PC-3 (cell line): ENCODE measurements at regions of chr4 and their contacts with region 1.

Region 1: DNA sequence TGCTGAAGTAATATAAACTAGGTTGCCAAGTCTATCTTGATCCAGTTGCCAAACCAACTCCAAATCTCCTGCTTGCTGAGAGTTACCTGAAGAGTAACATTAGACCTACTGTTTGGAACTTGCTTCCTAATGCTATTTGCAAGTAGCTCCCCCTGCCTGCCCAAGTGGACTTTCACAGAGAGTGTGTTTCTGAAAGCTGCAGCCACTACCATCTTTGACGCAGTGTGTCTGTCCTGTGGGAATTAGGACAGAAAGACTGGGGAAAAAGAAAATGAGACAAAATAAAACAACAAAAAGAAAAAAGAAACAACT is 195.0 kb upstream of the HS3ST1 start:
- DNase-seq: peak; percentile 63
- ATAC-seq: peak; percentile 84
- H3K4me3 ChIP-seq: no peak overlapping the region
- H3K27ac ChIP-seq: peak overlapping the region; percentile 82
- H3K4me1 ChIP-seq: peaks cover 58% of the 10 kb centered on the region
- H3K27me3 ChIP-seq: no peaks in the 10 kb centered on the region
- CTCF ChIP-seq: peak; percentile 69

Region 2: GRCh38 chr4:11428899-11429698 is 194.6 kb before region 1 on chr4:
- CTCF ChIA-PET with region 1: no interaction called
- POLR2A ChIA-PET with region 1: no interaction called
- intact Hi-C with region 1: loop called (anchors 1 kb)
- DNase-seq: peak; percentile 86
- ATAC-seq: peak; percentile 90
- H3K4me3 ChIP-seq: peak overlapping the region; percentile 90
- H3K27ac ChIP-seq: peak overlapping the region; percentile 91
- H3K4me1 ChIP-seq: peaks cover 10% of the 10 kb centered on the region; the same call in 1 of the 2 replicates
- H3K27me3 ChIP-seq: no peaks in the 10 kb centered on the region
- CTCF ChIP-seq: peak; percentile 64

Region 3: DNA sequence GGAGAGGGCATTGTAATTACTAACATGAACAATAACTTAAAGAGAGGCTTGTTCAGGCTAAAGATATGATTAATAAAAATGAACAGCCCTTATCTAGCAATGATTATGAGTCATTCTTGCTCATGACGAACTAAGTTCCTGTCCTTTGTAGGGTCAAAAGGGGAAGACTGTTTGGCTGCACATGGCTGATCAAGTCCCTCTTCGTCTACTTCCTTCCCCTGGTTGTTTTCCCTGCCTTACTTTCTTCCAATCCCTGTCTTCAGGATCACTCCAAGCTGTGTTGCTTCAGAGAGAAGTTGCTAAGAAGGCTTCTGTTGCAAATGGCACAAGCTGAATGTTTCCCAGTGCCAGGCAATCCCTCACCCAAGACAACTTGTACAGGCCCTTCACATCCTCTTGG is 80.0 kb before region 1 on chr4:
- CTCF ChIA-PET with region 1: no interaction called
- POLR2A ChIA-PET with region 1: no interaction called
- intact Hi-C with region 1: loop called (anchors 1 kb)
- DNase-seq: peak; percentile 73
- ATAC-seq: peak; percentile 52
- H3K4me3 ChIP-seq: peak overlapping the region; percentile 25; the same call in 1 of the 2 replicates
- H3K27ac ChIP-seq: peak overlapping the region; percentile 99
- H3K4me1 ChIP-seq: peaks cover 38% of the 10 kb centered on the region
- H3K27me3 ChIP-seq: no peaks in the 10 kb centered on the region
- CTCF ChIP-seq: no peak